B cell (primary cell): ENCODE measurements at regions of chr19 and their contacts with region 1.

Region 1: DNA sequence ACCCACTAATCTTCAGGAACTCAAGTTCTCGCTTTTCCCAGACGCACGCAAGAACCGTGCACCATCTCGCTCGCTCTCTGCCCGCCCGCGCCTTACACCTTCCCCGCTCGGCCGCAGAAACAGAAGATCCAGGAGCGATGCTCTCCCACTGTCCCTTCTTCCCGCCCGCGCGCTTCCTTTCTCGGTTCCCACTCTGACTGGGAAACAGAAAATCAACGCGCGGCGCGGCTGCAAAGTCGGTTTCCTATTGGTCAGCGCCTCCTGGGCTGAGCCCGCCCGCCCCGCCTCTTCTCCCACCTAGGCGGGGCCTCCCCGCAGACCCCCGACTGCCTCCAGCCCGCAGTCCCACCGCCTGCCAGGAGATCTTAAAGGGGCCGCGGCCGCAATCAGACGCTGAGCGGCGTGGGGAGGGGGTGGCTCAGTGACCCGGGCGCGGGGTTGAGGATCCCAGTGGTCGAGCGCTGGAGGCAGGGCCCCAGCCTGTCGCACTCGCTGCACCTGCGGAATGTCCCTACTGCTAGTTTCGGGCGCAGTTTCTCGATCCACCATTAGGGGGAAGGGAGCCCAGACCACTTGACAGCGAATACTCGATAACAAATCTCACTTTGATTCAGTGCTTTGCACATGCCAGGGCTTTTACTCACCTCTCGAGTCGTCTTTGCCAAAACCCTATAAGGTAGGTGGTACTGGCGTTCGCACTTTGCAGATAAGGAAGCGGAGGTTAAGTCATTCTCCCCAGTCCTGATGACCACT is 685 bp upstream of the SLC25A23 start:
- DNase-seq: peak; percentile 99
- ATAC-seq: peak; percentile 84
- H3K4me3 ChIP-seq: peak overlapping the region; percentile 60 to 93 (median 78)
- H3K4me3 Mint-ChIP-seq: peak overlapping the region; percentile 91
- H3K27ac ChIP-seq: peak overlapping the region; percentile 76 to 86
- H3K27ac Mint-ChIP-seq: peak overlapping the region; percentile 78
- H3K4me1 ChIP-seq: peaks cover 11 to 34% of the 10 kb centered on the region in 2 donors
- H3K4me1 Mint-ChIP-seq: peaks cover 32% of the 10 kb centered on the region
- H3K27me3 ChIP-seq: peaks cover 0 to 15% (median 6%) of the 10 kb centered on the region in 4 experiments
- H3K27me3 Mint-ChIP-seq: no peaks in the 10 kb centered on the region
- CTCF ChIP-seq: peak; percentile 78

Region 2: DNA sequence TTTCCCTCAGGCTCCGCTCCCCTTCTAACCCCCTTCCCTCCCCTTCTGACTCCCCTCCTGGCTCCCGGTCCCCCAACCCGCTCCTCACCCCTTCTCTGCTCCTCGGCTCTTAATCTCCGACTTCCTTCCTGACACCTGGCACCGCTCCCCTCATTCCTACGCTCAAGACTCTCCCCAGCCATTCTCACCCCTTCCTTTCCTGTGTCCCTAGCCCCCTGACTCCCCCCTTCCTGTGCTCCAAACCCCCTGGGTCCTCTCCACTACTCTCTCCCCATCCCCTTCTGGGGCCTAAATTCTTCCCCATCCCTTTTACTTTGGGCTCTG is 98.3 kb before region 1 on chr19:
- CTCF ChIA-PET with region 1: no interaction called
- POLR2A ChIA-PET with region 1: no interaction called
- intact Hi-C with region 1: loop called (anchors 1 kb)
- DNase-seq: no peak
- ATAC-seq: no peak
- H3K4me3 ChIP-seq: peak overlapping the region in 4 of 5 experiments; percentile 60 to 72 (median 66)
- H3K4me3 Mint-ChIP-seq: peak overlapping the region; percentile 94
- H3K27ac ChIP-seq: peak overlapping the region; percentile 60 to 79
- H3K27ac Mint-ChIP-seq: peak overlapping the region; percentile 92
- H3K4me1 ChIP-seq: peaks cover 6 to 12% of the 10 kb centered on the region in 2 donors
- H3K4me1 Mint-ChIP-seq: peaks cover 14% of the 10 kb centered on the region
- H3K27me3 ChIP-seq: no peaks in the 10 kb centered on the region
- H3K27me3 Mint-ChIP-seq: no peaks in the 10 kb centered on the region
- CTCF ChIP-seq: no peak

Region 3: DNA sequence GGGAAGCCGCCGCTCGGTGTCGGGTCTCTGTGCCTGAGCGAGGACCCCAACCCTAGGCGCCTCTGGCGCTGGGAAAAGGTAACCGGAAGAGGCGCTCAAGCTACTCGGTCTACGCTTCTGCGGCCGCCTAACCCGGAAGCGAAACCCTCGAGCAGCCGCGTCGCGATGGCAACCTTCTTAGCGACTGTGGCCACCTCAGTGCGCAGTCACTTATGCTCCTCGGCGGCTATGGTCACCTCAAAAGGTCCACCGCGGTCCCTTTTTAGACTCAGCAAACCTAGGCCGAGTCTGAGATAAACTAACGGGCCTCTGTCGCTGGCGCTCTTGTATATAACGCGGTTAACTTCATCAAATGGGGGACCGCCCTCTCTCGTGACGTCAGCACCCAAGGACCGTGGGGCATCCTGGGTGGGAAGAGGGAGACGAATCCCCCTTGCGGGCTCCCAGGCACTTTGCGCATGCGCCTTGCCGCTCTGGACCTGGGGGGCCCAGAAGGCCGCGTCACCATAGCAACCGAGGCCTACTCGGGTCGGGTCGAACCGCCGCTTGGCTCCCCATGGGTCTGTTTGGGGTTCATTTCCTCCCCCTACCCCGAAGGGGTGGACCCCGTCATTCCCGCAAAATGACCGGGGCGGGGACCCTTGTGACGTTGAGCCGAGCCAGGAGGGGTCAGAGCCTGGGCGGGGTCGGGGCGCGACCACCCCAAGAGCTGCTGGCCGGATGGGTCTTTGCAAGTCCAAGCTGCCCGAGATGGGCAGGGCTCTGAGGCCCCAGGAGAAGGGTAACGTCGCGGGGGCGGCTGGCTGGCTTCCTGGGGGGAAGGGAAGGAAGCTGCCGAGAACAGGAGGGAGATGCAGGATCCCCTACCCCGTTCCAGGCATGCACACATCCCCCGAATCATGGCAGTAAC is 66.9 kb before region 1 on chr19 and contains the start of gene GTF2F1:
- CTCF ChIA-PET with region 1: no interaction called
- POLR2A ChIA-PET with region 1: interaction called, 10 read pairs
- intact Hi-C with region 1: loop called (anchors 1 kb)
- DNase-seq: peak; percentile 98
- ATAC-seq: peak; percentile 82
- H3K4me3 ChIP-seq: peak within 1 kb of the TSS; percentile 70 to 91 (median 83)
- H3K4me3 Mint-ChIP-seq: peak within 1 kb of the TSS; percentile 95
- H3K27ac ChIP-seq: peak within 1 kb of the TSS; percentile 73 to 95
- H3K27ac Mint-ChIP-seq: peak within 1 kb of the TSS; percentile 97
- H3K4me1 ChIP-seq: peaks cover 15 to 16% of the 10 kb centered on the region in 2 donors
- H3K4me1 Mint-ChIP-seq: peaks cover 26% of the 10 kb centered on the region
- H3K27me3 ChIP-seq: no peaks in the 10 kb centered on the region
- H3K27me3 Mint-ChIP-seq: no peaks in the 10 kb centered on the region
- CTCF ChIP-seq: no peak
- total RNA-seq, gene GTF2F1: 56.5 and 63.4 TPM in 2 replicates

Region 4: DNA sequence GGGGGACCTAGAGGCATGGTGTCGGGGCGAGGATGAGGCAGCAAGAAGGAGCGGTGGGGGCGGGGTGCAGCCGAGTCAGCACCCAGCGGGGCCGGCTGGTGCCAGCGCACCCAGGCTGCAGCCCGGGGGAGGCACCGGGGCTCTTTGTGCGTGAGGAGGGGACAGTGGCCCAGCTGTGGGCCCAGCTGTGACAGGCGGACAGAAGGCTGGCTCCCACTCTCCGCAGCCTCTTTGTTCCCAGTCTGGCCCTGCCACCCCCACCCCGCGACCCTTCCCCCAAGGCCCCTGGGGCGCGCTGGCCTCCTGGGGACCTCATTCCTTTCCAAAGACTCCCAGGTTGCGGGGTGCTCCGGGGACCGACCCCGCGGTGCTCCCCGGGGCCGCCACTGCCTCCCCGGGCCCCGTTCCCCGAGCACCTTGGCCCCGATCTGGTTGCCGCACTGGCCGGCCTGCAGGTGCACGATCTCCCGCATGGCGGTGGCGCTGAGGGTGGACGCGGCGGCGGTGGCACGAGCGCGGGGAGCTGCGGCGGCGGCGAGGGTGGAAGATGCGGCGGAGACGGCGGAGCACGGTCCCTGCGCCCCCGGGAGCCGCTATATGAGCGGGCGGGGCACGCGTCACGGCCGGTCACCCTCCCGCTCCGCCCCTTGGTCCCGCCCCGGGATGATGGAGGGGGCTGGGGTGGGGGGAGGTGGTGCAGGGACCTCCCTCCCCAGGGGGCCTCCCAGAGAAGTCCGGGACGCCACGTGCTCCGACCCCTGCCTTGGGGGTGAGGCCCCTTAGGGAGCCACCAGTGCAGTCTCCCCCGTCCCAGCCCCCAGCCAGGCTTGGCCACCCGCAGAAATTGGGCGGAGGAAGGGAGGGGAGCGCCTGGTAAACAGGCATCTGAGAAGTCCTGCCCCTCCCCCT is 41.7 kb after region 1 on chr19 and contains the start of gene TUBB4A:
- CTCF ChIA-PET with region 1: interaction called, 5 read pairs
- POLR2A ChIA-PET with region 1: no interaction called
- intact Hi-C with region 1: loop called (anchors 1 kb)
- DNase-seq: peak; percentile 68
- ATAC-seq: peak; percentile 83
- H3K4me3 ChIP-seq: peak within 1 kb of the TSS in 4 of 5 experiments; percentile 47 to 67 (median 59)
- H3K4me3 Mint-ChIP-seq: peak within 1 kb of the TSS; percentile 92
- H3K27ac ChIP-seq: no peak within 1 kb of the TSS
- H3K27ac Mint-ChIP-seq: peak within 1 kb of the TSS; percentile 78
- H3K4me1 ChIP-seq: peaks cover 16 to 21% of the 10 kb centered on the region in 2 donors
- H3K4me1 Mint-ChIP-seq: peaks cover 18% of the 10 kb centered on the region
- H3K27me3 ChIP-seq: peaks cover 0 to 17% (median 3%) of the 10 kb centered on the region in 4 experiments
- H3K27me3 Mint-ChIP-seq: peaks cover 3% of the 10 kb centered on the region
- CTCF ChIP-seq: peak; percentile 13
- total RNA-seq, gene TUBB4A: 21.9 and 22.1 TPM in 2 replicates

Region 5: DNA sequence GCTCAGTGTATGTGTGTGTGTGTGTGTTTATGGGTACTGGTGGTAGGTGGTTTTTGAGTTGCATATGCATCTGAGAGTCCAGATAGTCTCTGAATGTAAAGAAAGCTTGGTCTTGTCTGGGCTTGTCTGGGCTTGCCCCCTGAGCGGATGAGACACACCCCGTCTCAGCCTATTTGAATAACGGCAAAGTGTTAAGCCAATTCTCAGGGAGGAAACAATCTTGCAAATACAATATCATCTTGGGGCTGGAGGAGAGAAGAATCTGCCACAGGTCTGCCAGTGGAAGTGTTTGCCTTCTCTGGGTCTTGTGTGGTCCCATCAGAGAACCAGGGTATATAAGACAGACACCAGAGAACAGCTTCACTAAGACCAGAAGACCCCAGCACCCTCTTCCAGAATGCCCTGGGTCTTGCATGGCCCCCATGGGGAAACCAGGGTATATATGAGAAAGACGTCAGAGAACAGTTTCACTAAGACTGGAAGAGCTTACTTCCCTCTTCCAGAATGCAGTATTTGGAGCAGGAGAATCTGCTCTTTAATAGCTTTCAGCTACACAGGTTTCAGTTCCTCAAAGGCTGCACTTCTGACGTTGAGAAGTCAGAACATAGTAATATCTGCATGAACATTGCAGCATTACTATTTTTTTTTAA is 117.3 kb after region 1 on chr19:
- CTCF ChIA-PET with region 1: no interaction called
- POLR2A ChIA-PET with region 1: no interaction called
- intact Hi-C with region 1: loop called (anchors 2 kb)
- DNase-seq: peak; percentile 88
- ATAC-seq: peak; percentile 85
- H3K4me3 ChIP-seq: peak overlapping the region in 1 of 5 experiments; percentile 3
- H3K4me3 Mint-ChIP-seq: no peak overlapping the region
- H3K27ac ChIP-seq: peak overlapping the region; percentile 68 to 78
- H3K27ac Mint-ChIP-seq: no peak overlapping the region
- H3K4me1 ChIP-seq: peaks cover 16 to 28% of the 10 kb centered on the region in 2 donors
- H3K4me1 Mint-ChIP-seq: peaks cover 21% of the 10 kb centered on the region
- H3K27me3 ChIP-seq: peaks cover 0 to 5% (median 0%) of the 10 kb centered on the region in 4 experiments
- H3K27me3 Mint-ChIP-seq: no peaks in the 10 kb centered on the region
- CTCF ChIP-seq: no peak